Motor neuron (in vitro differentiated cells): ENCODE measurements at regions of chr1 and their contacts with region 1.

Region 1: GRCh38 chr1:99180343-99180808 is 83.9 kb upstream of the PLPPR4 start:
- ATAC-seq: peak; percentile 91 to 97 (median 94)
- H3K4me3 ChIP-seq: no peak overlapping the region
- H3K27ac ChIP-seq: no peak overlapping the region
- H3K4me1 ChIP-seq: peaks cover 2 to 11% of the 10 kb centered on the region in 2 donors

Region 2: DNA sequence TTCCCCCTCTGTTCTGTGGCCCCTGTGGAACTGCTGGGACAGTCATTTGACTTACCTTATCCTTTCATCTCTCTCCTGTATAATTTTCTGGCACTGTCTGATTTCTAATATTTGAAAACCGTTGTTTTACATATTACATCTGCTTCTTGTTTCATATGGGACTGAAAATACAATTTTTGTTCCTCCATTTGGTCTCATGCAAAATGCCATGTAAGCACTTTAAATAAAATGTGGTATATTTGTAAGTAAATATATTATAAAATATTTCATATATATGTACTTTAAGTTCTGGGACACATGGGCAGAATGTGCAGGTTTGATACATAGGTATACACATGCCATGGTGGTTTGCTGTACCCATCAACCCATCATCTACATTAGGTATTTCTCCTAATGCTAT is 81.8 kb before region 1 on chr1:
- in situ Hi-C with region 1: no loop called
- ATAC-seq: no peak
- H3K4me3 ChIP-seq: no peak overlapping the region
- H3K27ac ChIP-seq: no peak overlapping the region
- H3K4me1 ChIP-seq: no peaks in the 10 kb centered on the region

Region 3: GRCh38 chr1:99481391-99481996 is 301.1 kb after region 1 on chr1:
- in situ Hi-C with region 1: loop called in 4 of 9 experiments (anchors 10 to 25 kb)
- ATAC-seq: peak; percentile 60 to 88 (median 65)
- H3K4me3 ChIP-seq: no peak overlapping the region
- H3K27ac ChIP-seq: no peak overlapping the region
- H3K4me1 ChIP-seq: peaks cover 3 to 5% of the 10 kb centered on the region in 2 donors

Region 4: DNA sequence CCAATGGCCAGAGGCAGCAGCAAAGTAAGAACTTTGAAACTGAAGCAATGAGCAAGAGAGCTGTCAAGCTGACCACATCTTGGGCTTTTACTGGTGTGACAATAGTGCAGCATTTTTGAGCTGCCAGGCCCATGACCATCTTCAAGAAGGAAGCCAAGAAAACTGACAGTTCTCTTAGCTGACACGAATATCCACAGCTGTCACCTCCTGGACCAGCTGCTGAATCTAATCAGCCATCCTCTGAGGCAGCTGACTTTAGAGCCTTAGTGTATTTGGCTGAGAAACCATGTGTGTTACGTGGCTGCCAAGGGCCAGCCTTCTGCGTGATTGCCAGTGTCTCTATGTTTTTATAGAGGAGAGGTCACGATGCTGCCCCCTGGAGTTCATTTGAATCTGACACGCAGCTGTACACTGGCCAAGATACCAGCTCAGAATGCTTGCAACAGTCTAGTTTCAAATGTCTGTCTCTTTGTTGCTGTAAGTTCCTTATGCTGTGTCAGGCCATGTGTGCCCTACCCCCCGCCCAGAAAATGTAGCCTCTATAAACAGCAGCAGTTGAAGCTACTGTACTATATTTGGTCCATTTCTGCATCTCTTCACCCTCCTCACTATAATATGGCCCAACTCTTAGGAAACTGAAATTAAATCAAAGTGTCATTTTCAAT is 505.3 kb after region 1 on chr1:
- in situ Hi-C with region 1: loop called in 3 of 9 experiments (anchors 25 kb)
- ATAC-seq: peak; percentile 88 to 99 (median 96)
- H3K4me3 ChIP-seq: no peak overlapping the region
- H3K27ac ChIP-seq: no peak overlapping the region
- H3K4me1 ChIP-seq: peaks cover 2 to 5% of the 10 kb centered on the region in 2 donors

Region 5: DNA sequence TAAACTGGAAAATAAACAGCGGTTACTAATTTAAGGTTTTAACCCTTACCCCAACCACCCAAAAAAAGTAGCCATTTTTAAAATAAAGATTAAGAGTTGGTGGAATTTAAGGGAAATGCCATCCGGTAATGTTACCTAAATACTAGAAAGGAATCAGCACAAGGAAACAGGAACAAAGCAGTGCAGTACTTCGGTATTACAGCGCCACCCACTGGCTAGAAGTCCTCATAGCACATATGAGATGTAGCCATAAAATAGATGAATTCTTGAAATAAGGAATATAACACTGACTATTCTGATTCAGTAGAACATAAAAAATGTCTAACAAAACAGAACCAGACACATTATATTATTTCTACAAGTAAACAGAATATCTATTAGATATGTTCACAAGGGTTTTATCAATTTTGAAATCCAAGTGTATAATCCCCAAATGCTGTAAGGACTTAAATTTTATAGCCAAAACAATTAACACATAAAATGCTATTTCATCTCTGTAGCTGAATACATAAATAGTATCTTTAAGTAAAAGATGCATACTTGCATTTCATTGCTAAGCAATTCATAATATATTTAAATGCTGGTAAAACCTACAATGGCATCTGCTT is 527.3 kb after region 1 on chr1:
- in situ Hi-C with region 1: loop called in 4 of 9 experiments (anchors 25 kb)
- ATAC-seq: peak; percentile 52 to 87 (median 72)
- H3K4me3 ChIP-seq: no peak overlapping the region
- H3K27ac ChIP-seq: no peak overlapping the region
- H3K4me1 ChIP-seq: peaks cover 3% of the 10 kb centered on the region in 2 donors

Region 6: DNA sequence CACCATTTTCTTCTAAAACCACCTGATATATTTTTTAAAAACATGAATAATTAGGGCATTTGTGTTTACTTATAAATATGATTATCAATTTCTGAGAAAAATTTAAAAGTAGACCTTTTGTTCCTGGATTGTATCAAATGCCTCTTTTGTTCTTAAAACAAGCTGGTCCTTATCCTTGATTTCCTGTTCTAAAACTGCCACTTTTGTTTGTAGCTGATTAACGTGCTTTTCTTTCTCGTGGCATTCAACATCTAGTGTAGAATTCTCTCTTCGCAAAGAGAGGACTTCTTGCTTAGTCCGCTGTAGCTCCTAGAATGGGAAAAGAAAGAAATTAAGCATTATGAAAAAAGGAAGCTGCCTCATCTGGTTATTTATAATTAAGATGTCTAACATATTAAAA is 927.3 kb after region 1 on chr1:
- in situ Hi-C with region 1: no loop called
- ATAC-seq: no peak
- H3K4me3 ChIP-seq: no peak overlapping the region
- H3K27ac ChIP-seq: no peak overlapping the region
- H3K4me1 ChIP-seq: no peaks in the 10 kb centered on the region